ENCODE measurements at regions of chr12 and their contacts with region 1.

Region 1: GRCh38 chr12:39692258-39692853 is 72.8 kb upstream of the ABCD2 start:
- DNase-seq: no peak

Region 2: DNA sequence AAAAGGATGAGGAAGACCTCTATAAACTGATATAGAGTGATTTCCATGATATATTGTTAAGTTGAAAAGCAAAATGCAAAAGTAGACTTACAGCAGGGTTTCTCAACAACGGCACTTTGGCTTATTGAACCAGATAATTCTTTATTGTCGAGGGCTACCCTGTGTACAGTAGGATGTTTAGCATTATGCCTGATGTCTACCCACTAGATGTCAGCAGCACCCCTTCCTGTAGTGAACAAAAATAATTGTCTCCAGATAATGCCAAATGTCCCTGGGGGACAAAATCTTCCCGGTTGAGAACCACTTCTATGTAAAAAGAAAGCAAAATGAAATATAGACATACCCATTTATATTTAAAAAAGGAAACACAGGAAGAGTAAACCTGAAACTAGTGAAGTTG is 105.1 kb before region 1 on chr12:
- intact Hi-C with region 1: loop called (anchors 5 kb)
- DNase-seq: no peak